CD8-positive, alpha-beta T cell (primary cell): ENCODE measurements at regions of chrX and their contacts with region 1.

Region 1: DNA sequence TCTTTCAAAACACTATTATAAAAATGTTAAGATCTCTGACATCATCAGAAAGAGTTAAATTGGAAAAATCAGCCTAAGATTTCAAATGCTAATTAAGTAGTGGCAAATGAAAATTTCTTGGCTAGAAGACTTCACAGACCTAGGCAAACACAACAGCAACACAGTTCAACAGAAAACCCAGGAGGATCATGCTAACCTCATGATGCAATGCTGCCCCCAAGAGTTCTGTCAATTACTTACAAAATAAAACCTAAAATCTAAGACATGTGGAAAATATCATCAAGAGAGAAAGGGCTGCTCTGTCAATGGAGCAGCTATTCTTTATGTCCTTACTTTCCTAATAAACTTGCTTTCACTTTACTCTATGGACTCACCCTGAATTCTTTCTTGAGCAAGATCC is 21.0 kb downstream of the S100G start:
- DNase-seq: peak in 5 of 9 experiments; percentile 8 to 51 (median 30)
- ATAC-seq: no peak
- H3K4me3 ChIP-seq: no peak overlapping the region
- H3K4me3 Mint-ChIP-seq: no peak overlapping the region
- H3K27ac ChIP-seq: no peak overlapping the region
- H3K27ac Mint-ChIP-seq: no peak overlapping the region
- H3K4me1 ChIP-seq: no peaks in the 10 kb centered on the region
- H3K4me1 Mint-ChIP-seq: peaks cover 3% of the 10 kb centered on the region
- H3K27me3 ChIP-seq: no peaks in the 10 kb centered on the region
- H3K27me3 Mint-ChIP-seq: no peaks in the 10 kb centered on the region
- CTCF ChIP-seq: no peak

Region 2: DNA sequence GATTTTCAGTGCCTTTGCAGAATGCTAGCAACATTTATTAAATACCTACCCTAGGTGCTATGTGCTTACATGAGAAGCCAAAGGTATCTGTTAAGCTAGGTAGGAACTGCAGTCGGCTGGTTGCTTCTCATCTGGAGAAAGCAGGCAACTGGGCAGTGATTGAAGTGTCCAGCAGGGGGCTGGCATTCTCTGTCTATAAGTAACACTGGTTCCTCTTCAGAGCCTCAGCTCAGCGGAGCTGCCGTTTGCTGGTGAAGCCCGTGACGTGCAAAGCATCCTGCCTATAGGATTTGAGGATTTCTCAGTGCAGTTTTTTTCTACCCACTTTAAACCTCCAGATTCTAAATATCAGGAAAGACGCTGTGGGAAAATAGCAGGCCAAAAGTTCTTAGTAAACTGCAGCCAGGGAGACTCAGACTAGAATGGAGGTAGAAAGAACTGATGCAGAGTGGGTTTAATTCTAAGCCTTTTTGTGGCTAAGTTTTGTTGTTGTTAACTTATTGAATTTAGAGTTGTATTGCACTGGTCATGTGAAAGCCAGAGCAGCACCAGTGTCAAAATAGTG is 547.7 kb before region 1 on chrX and contains the start of gene GRPR:
- CTCF ChIA-PET with region 1: interaction called, 6 read pairs
- POLR2A ChIA-PET with region 1: no interaction called
- intact Hi-C with region 1: loop called in 1 of 2 experiments (anchors 5 kb)
- DNase-seq: peak in 8 of 9 experiments; percentile 19 to 64 (median 50)
- ATAC-seq: peak; percentile 83
- H3K4me3 ChIP-seq: no peak within 1 kb of the TSS
- H3K4me3 Mint-ChIP-seq: no peak within 1 kb of the TSS
- H3K27ac ChIP-seq: no peak within 1 kb of the TSS
- H3K27ac Mint-ChIP-seq: no peak within 1 kb of the TSS
- H3K4me1 ChIP-seq: no peaks in the 10 kb centered on the region
- H3K4me1 Mint-ChIP-seq: peaks cover 7% of the 10 kb centered on the region
- H3K27me3 ChIP-seq: no peaks in the 10 kb centered on the region
- H3K27me3 Mint-ChIP-seq: peaks cover 6% of the 10 kb centered on the region
- CTCF ChIP-seq: peak; percentile 24
- total RNA-seq, gene GRPR: 0.17 TPM in 1 of 2 experiments, not detected in the other

Region 3: GRCh38 chrX:16278927-16279326 is 392.1 kb before region 1 on chrX:
- CTCF ChIA-PET with region 1: no interaction called
- POLR2A ChIA-PET with region 1: no interaction called
- intact Hi-C with region 1: loop called in 1 of 2 experiments (anchors 10 kb)
- DNase-seq: peak in 1 of 9 experiments; percentile 1
- ATAC-seq: no peak
- H3K4me3 ChIP-seq: no peak overlapping the region
- H3K4me3 Mint-ChIP-seq: no peak overlapping the region
- H3K27ac ChIP-seq: no peak overlapping the region
- H3K27ac Mint-ChIP-seq: no peak overlapping the region
- H3K4me1 ChIP-seq: no peaks in the 10 kb centered on the region
- H3K4me1 Mint-ChIP-seq: no peaks in the 10 kb centered on the region
- H3K27me3 ChIP-seq: no peaks in the 10 kb centered on the region
- H3K27me3 Mint-ChIP-seq: peaks cover 10% of the 10 kb centered on the region
- CTCF ChIP-seq: no peak

Region 4: DNA sequence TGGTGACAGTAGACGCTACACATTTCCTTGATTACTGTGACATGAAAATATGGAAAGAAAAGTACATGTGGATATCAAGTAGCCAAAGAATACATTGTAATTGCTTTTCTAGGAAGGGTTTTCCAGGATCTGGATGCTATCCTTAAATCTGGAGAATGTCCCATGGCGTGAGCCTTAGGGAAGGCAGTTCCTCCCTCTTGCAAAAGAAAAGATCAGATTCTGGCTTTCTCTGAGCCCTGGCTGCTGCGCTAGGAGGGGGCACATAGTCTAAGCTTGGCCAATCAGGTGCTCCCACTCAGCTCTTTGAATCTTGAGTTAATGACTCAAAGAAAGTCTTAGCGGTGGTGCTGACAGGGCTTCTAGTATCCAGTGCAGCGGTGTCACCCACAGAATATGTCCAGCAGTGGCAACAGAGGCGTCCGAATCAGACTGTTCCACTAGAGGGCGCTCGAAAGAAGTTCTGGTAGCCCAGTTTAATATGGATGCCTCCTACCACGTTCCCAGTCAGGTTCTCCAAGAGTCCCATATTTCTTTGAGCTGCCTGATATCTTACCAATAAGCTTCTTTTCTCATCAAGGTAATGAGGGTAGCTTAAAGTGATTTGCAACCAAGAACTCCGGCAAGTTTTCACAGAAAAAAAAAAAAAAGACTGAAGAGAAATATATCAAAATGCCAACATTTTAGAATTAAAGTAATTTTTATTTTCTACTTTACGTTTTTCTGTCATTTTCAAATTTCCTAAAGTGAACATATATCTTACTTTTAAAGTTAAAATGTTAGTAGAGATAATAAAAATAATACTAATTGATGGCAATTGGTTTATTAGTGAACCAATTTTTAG is 234.4 kb before region 1 on chrX:
- CTCF ChIA-PET with region 1: interaction called, 13 read pairs
- POLR2A ChIA-PET with region 1: no interaction called
- intact Hi-C with region 1: loop called (anchors 2 kb)
- DNase-seq: peak; percentile 8 to 73 (median 56)
- ATAC-seq: peak; percentile 46
- H3K4me3 ChIP-seq: no peak overlapping the region
- H3K4me3 Mint-ChIP-seq: no peak overlapping the region
- H3K27ac ChIP-seq: no peak overlapping the region
- H3K27ac Mint-ChIP-seq: no peak overlapping the region
- H3K4me1 ChIP-seq: peaks cover 15% of the 10 kb centered on the region
- H3K4me1 Mint-ChIP-seq: peaks cover 15% of the 10 kb centered on the region
- H3K27me3 ChIP-seq: no peaks in the 10 kb centered on the region
- H3K27me3 Mint-ChIP-seq: no peaks in the 10 kb centered on the region
- CTCF ChIP-seq: peak; percentile 60

Region 5: GRCh38 chrX:16610121-16610621 is 60.8 kb before region 1 on chrX:
- CTCF ChIA-PET with region 1: no interaction called
- POLR2A ChIA-PET with region 1: no interaction called
- intact Hi-C with region 1: no loop called
- DNase-seq: no peak
- ATAC-seq: no peak
- H3K4me3 ChIP-seq: no peak overlapping the region
- H3K4me3 Mint-ChIP-seq: no peak overlapping the region
- H3K27ac ChIP-seq: no peak overlapping the region
- H3K27ac Mint-ChIP-seq: no peak overlapping the region
- H3K4me1 ChIP-seq: peaks cover 7% of the 10 kb centered on the region
- H3K4me1 Mint-ChIP-seq: peaks cover 14% of the 10 kb centered on the region
- H3K27me3 ChIP-seq: no peaks in the 10 kb centered on the region
- H3K27me3 Mint-ChIP-seq: no peaks in the 10 kb centered on the region
- CTCF ChIP-seq: no peak

Region 6: DNA sequence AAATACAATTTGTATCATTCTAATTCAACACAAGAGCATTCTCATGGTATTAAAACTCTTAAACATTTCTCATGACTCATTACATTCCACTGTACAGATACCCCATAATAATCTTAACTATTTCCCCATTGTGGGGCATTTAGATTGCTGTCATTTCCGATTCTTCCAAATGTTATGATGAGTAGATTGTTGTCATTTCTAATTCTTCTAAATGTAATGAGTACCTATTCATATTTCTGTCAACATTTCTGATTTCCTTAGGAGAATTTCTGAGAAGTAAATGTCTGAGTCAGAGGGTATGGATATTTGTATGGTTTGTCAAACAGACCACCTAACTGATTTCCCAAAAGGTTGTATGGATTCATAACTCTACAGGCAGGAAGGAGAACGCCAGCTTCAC is 12.7 kb before region 1 on chrX:
- CTCF ChIA-PET with region 1: no interaction called
- POLR2A ChIA-PET with region 1: no interaction called
- intact Hi-C with region 1: no loop called
- DNase-seq: no peak
- ATAC-seq: no peak
- H3K4me3 ChIP-seq: no peak overlapping the region
- H3K4me3 Mint-ChIP-seq: no peak overlapping the region
- H3K27ac ChIP-seq: no peak overlapping the region
- H3K27ac Mint-ChIP-seq: no peak overlapping the region
- H3K4me1 ChIP-seq: no peaks in the 10 kb centered on the region
- H3K4me1 Mint-ChIP-seq: no peaks in the 10 kb centered on the region
- H3K27me3 ChIP-seq: no peaks in the 10 kb centered on the region
- H3K27me3 Mint-ChIP-seq: no peaks in the 10 kb centered on the region
- CTCF ChIP-seq: no peak

Region 7: GRCh38 chrX:16687514-16687913 is 16.5 kb after region 1 on chrX:
- CTCF ChIA-PET with region 1: no interaction called
- POLR2A ChIA-PET with region 1: no interaction called
- intact Hi-C with region 1: no loop called
- DNase-seq: no peak
- ATAC-seq: no peak
- H3K4me3 ChIP-seq: no peak overlapping the region
- H3K4me3 Mint-ChIP-seq: no peak overlapping the region
- H3K27ac ChIP-seq: no peak overlapping the region
- H3K27ac Mint-ChIP-seq: no peak overlapping the region
- H3K4me1 ChIP-seq: no peaks in the 10 kb centered on the region
- H3K4me1 Mint-ChIP-seq: no peaks in the 10 kb centered on the region
- H3K27me3 ChIP-seq: no peaks in the 10 kb centered on the region
- H3K27me3 Mint-ChIP-seq: no peaks in the 10 kb centered on the region
- CTCF ChIP-seq: no peak